ENCODE measurements at regions of chr4 and their contacts with region 1.

Region 1: DNA sequence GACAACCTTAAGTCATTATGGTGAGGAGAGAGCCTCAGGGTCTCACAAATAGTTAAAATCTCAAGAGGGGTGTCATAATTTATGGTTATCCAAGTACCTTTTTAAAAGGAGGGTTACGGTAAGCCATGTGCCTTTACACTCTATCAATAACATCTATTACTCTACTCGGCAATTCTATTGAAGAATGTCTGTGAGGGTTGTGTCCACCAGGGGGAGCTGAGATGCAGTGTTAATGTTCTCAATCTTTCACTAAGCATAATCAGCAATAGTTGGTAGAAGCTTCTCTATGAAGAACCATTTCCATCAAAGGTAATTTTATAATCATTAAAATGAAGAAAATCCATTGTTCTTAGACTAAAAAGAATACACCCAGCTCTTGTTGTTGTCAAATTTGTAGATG is 457.4 kb downstream of the CENPC start:
- DNase-seq: peak in 1 of 2 experiments; percentile 55
- H3K4me3 ChIP-seq: no peak overlapping the region
- H3K4me3 Mint-ChIP-seq: no peak overlapping the region
- H3K27ac Mint-ChIP-seq: no peak overlapping the region
- H3K4me1 ChIP-seq: no peaks in the 10 kb centered on the region
- H3K4me1 Mint-ChIP-seq: no peaks in the 10 kb centered on the region
- H3K27me3 ChIP-seq: no peaks in the 10 kb centered on the region
- H3K27me3 Mint-ChIP-seq: no peaks in the 10 kb centered on the region
- CTCF ChIP-seq: peak in 1 of 2 experiments; percentile 52

Region 2: DNA sequence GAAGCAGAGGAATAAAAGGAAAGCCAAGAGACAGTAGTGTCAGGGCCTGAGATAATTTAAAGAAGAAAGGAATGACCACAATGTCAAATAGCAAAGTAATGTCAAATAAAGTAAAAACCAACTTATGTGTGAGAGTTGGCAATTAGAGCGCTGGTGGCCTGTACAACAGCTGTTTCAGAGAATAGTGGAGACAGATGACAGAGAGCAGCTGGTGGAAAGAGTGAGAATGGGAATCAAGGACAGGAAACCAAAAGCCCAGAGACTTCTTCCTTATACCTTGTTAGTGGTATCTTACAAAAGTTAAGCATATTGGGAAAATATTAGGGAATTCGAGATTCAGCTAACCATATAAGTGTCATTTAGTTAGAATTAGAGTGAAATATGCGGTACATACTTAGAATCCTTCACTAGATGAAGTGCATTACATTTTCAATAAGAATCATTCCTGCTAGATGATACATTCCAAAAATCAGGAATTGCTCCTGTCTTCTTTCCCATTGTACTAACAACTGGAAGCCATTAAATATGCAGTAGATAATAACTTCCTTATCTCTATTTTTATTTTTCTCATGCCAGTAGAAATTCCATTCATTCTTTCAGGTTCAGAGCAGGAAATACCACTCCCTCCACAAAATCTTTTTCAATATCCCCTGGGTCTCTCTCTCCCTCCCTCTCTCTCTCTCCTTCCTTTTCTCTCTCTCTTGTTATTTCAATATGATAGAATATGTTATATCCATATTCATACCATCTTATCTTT is 68.0 kb before region 1 on chr4:
- CTCF ChIA-PET with region 1: no interaction called
- POLR2A ChIA-PET with region 1: no interaction called
- intact Hi-C with region 1: loop called (anchors 5 kb)
- DNase-seq: no peak
- H3K4me3 ChIP-seq: no peak overlapping the region
- H3K4me3 Mint-ChIP-seq: no peak overlapping the region
- H3K27ac Mint-ChIP-seq: peak overlapping the region; percentile 9
- H3K4me1 ChIP-seq: peaks cover 32% of the 10 kb centered on the region
- H3K4me1 Mint-ChIP-seq: peaks cover 24% of the 10 kb centered on the region
- H3K27me3 ChIP-seq: no peaks in the 10 kb centered on the region
- H3K27me3 Mint-ChIP-seq: no peaks in the 10 kb centered on the region
- CTCF ChIP-seq: no peak

Region 3: GRCh38 chr4:67037504-67038227 is 50.2 kb before region 1 on chr4:
- CTCF ChIA-PET with region 1: no interaction called
- POLR2A ChIA-PET with region 1: no interaction called
- intact Hi-C with region 1: no loop called
- DNase-seq: no peak
- H3K4me3 ChIP-seq: no peak overlapping the region
- H3K4me3 Mint-ChIP-seq: no peak overlapping the region
- H3K27ac Mint-ChIP-seq: no peak overlapping the region
- H3K4me1 ChIP-seq: no peaks in the 10 kb centered on the region
- H3K4me1 Mint-ChIP-seq: no peaks in the 10 kb centered on the region
- H3K27me3 ChIP-seq: no peaks in the 10 kb centered on the region
- H3K27me3 Mint-ChIP-seq: no peaks in the 10 kb centered on the region
- CTCF ChIP-seq: no peak

Region 4: GRCh38 chr4:67393699-67394281 is 305.9 kb after region 1 on chr4:
- CTCF ChIA-PET with region 1: no interaction called
- POLR2A ChIA-PET with region 1: no interaction called
- intact Hi-C with region 1: loop called (anchors 10 kb)
- DNase-seq: peak in 1 of 2 experiments; percentile 27
- H3K4me3 ChIP-seq: no peak overlapping the region
- H3K4me3 Mint-ChIP-seq: no peak overlapping the region
- H3K27ac Mint-ChIP-seq: no peak overlapping the region
- H3K4me1 ChIP-seq: peaks cover 6% of the 10 kb centered on the region; the same call in 1 of the 2 replicates
- H3K4me1 Mint-ChIP-seq: peaks cover 8% of the 10 kb centered on the region
- H3K27me3 ChIP-seq: no peaks in the 10 kb centered on the region
- H3K27me3 Mint-ChIP-seq: no peaks in the 10 kb centered on the region
- CTCF ChIP-seq: peak; percentile 46 to 63